Activated CD8-positive, alpha-beta T cell treated with anti-CD3 and anti-CD28 coated beads, Interleukin-2, amount 10 ng/mL, durations not matched to agents 7 days and 5 days (primary cell): ENCODE measurements at regions of chr9 and their contacts with region 1.

Region 1: GRCh38 chr9:33817327-33818166 is 587 bp downstream of the UBE2R2 start:
- DNase-seq: peak; percentile 66
- ATAC-seq: peak; percentile 27
- H3K4me3 Mint-ChIP-seq: peak overlapping the region; percentile 91
- H3K27ac Mint-ChIP-seq: peak overlapping the region; percentile 93
- H3K4me1 Mint-ChIP-seq: peaks cover 48% of the 10 kb centered on the region
- H3K27me3 Mint-ChIP-seq: peaks cover under 1% of the 10 kb centered on the region

Region 2: DNA sequence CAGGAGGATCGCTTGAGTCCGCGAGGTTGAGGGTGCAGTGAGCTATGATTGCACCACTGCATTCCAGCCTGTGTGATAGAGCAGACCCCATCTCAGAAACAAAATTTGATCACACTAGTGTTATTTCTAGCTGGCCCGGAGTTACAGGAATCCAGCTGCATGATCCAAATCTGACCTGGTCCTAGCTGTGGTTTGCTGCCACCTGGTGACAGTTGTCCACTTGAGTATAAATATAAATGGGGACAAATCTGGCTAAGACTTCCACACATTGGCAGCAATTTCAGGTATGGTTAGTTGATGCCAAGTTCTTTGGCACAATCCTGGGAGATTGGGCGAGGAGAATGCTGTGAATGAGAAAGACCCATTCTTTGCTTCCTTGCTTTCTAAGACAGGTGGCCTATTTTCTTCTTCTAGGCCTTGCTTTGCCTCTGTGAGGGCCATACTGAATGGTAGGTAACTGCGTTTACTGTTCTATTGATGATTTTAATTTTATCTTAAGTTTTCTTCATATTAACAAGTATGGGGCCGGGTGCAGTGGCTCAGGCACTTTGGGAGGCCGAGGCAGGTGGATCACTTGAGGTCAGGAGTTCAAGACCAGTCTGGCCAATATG is 34.8 kb after region 1 on chr9:
- CTCF ChIA-PET with region 1: interaction called, 30 read pairs
- POLR2A ChIA-PET with region 1: interaction called, 3 read pairs
- DNase-seq: peak; percentile 52
- ATAC-seq: no peak
- H3K4me3 Mint-ChIP-seq: no peak overlapping the region
- H3K27ac Mint-ChIP-seq: no peak overlapping the region
- H3K4me1 Mint-ChIP-seq: peaks cover 18% of the 10 kb centered on the region
- H3K27me3 Mint-ChIP-seq: no peaks in the 10 kb centered on the region

Region 3: GRCh38 chr9:33860200-33860871 is 42.8 kb after region 1 on chr9:
- CTCF ChIA-PET with region 1: interaction called, 14 read pairs
- POLR2A ChIA-PET with region 1: no interaction called
- DNase-seq: no peak
- ATAC-seq: no peak
- H3K4me3 Mint-ChIP-seq: no peak overlapping the region
- H3K27ac Mint-ChIP-seq: no peak overlapping the region
- H3K4me1 Mint-ChIP-seq: peaks cover 7% of the 10 kb centered on the region
- H3K27me3 Mint-ChIP-seq: no peaks in the 10 kb centered on the region

Region 4: DNA sequence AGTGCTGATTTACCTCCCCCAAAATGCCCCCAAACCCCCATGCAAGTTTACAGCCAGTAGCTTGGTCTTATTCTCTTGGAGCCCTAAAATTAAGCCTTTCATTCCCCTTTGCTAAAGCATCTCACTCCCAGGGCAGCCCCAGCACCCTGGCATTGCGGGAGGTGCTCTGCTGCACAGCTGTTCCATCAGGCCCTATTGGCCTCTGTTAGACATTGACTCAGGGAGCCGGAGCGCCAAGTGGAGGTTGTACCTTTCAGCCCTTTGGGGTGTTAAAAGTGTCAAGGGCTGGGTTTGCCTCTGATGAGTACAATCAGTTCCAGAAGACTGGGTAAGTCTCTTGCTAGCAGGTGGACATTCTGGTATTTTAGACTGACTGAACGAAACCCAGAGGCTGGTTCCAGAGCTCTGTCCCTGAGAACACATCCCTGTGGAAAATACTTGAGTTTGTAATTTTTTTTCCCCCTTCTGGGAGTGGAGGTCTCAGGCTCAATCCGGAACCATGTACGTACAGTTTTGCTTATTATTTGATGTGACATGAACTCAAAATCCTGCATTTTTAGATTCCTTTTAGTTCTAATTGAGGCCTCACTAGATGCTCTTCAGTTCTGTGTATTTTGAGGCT is 101.8 kb after region 1 on chr9:
- CTCF ChIA-PET with region 1: interaction called, 14 read pairs
- POLR2A ChIA-PET with region 1: interaction called, 3 read pairs
- DNase-seq: no peak
- ATAC-seq: no peak
- H3K4me3 Mint-ChIP-seq: no peak overlapping the region
- H3K27ac Mint-ChIP-seq: no peak overlapping the region
- H3K4me1 Mint-ChIP-seq: no peaks in the 10 kb centered on the region
- H3K27me3 Mint-ChIP-seq: no peaks in the 10 kb centered on the region

Region 5: DNA sequence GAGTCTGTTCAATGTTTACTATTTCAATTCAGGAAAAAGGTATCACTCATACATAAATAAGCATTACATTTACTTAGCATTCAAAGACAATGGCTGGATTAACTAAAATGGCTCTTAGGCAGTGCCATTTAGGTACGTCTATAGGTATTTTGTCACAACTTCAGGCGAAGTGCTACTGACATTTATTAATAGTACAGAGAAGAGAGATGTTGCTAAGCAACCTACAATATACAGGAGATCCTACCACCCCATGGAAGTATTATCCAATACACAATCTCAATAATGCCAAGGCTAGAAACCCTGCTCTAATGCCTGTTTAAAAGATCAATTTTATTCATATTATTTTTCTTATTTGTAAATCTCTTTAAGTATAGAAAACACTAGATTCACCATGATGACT is 155.2 kb after region 1 on chr9:
- CTCF ChIA-PET with region 1: no interaction called
- POLR2A ChIA-PET with region 1: no interaction called
- DNase-seq: no peak
- ATAC-seq: no peak
- H3K4me3 Mint-ChIP-seq: no peak overlapping the region
- H3K27ac Mint-ChIP-seq: no peak overlapping the region
- H3K4me1 Mint-ChIP-seq: no peaks in the 10 kb centered on the region
- H3K27me3 Mint-ChIP-seq: no peaks in the 10 kb centered on the region

Region 6: DNA sequence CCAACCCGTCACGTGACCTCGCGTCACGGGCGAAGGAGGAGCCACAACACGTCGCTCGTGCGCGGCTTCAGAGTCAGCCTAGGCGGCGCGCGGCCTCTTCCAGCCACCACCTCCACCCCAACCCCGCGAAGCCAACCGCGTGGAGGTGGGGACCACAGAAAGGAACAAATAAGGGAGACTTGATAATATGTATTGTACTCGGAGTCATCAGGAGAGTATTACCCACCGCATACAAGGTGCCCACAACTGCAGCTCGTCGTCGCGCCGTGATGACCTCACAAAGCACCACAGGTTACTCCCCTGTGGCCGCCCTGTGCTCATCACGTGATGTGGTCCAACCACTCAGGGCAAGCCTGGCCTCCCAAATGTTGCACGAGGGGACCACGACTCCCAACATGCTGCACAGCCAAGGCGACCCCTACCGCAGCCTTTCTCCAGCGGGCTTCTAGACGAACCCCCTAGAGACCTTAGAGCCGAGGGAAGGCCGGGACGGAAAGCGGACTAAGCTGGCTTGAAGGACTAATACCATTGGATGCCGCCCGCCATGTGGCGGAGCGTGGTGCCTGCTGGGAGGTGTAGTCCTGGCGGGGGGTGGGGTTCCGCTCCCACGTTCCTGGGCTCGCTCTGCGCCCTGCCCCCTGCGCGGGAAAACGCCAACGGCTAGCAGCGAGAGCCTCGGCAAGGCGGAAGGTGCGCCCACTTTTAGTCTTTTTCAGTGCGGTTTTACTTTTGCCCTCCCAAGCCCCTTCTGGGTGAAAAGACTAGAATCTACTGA is 231.6 kb after region 1 on chr9:
- CTCF ChIA-PET with region 1: interaction called, 3 read pairs
- POLR2A ChIA-PET with region 1: interaction called, 10 read pairs
- DNase-seq: peak; percentile 98
- ATAC-seq: peak; percentile 86
- H3K4me3 Mint-ChIP-seq: peak overlapping the region; percentile 95
- H3K27ac Mint-ChIP-seq: peak overlapping the region; percentile 99
- H3K4me1 Mint-ChIP-seq: peaks cover 49% of the 10 kb centered on the region
- H3K27me3 Mint-ChIP-seq: no peaks in the 10 kb centered on the region